ENCODE measurements at regions of chr14 and their contacts with region 1.

Region 1: GRCh38 chr14:61178226-61179060 is 102.7 kb downstream of the TMEM30B start:
- DNase-seq: peak; percentile 70
- H3K4me3 Mint-ChIP-seq: peak overlapping the region; percentile 36
- H3K27ac Mint-ChIP-seq: peak overlapping the region; percentile 98
- H3K4me1 Mint-ChIP-seq: peaks cover 42% of the 10 kb centered on the region
- H3K27me3 Mint-ChIP-seq: no peaks in the 10 kb centered on the region
- CTCF ChIP-seq: no peak

Region 2: GRCh38 chr14:60980811-60981632 is 197.4 kb before region 1 on chr14 and contains the starts of genes SLC38A6 and TRMT5:
- CTCF ChIA-PET with region 1: no interaction called
- intact Hi-C with region 1: loop called (anchors 5 kb)
- DNase-seq: peak; percentile 92
- H3K4me3 Mint-ChIP-seq: no peak within 1 kb of the TSS
- H3K27ac Mint-ChIP-seq: no peak within 1 kb of the TSS
- H3K4me1 Mint-ChIP-seq: peaks cover 9% of the 10 kb centered on the region
- H3K27me3 Mint-ChIP-seq: no peaks in the 10 kb centered on the region
- CTCF ChIP-seq: no peak
- total RNA-seq, gene SLC38A6: 9.9 and 13.4 TPM in 2 replicates
- total RNA-seq, gene TRMT5: 20.3 and 22.8 TPM in 2 replicates

Region 3: DNA sequence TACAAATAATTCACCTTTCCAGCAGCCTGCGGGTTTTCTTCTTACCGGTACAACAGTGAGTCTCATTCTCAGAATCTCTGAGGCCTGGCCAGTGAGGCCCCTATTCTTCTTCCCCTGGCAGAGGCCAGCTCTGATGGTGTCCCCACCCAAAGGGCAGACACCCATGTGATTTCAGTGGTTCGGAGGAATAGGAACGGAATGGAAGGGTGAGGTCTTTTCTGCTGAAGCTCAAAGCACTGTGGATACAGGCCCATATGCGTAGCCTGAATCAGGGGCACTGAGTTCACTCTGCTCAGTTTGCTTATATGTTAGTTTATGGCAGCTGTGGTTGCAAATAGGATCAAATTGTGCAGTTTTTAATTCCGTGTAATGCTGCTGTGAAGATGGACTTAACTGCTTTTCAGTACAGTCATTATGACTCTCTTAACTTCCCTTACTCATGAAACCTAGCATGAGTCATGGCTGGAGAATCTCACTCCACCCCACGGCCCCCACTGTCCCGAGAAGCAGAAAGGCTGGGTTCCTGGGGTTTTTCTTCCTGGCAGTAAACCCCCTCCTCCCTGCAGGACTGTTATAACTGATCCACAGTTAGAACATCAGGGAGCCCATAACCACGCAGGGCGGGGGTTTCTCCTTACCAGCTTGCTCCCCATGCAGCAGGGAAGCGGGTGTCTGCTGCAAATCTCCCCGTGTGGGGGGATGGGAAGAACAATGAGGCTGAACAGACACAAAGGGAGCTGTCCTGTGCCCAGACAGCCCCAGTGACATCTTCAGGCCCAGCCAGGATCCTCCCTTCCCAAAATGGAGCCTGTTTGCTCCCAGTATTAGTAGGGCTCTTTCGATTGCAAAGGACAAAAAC is 74.7 kb before region 1 on chr14:
- CTCF ChIA-PET with region 1: no interaction called
- intact Hi-C with region 1: loop called (anchors 5 kb)
- DNase-seq: peak; percentile 77
- H3K4me3 Mint-ChIP-seq: no peak overlapping the region
- H3K27ac Mint-ChIP-seq: peak overlapping the region; percentile 93
- H3K4me1 Mint-ChIP-seq: peaks cover 31% of the 10 kb centered on the region
- H3K27me3 Mint-ChIP-seq: no peaks in the 10 kb centered on the region
- CTCF ChIP-seq: no peak

Region 4: GRCh38 chr14:61121355-61121787 is 57.1 kb before region 1 on chr14:
- CTCF ChIA-PET with region 1: interaction called, 4 read pairs
- intact Hi-C with region 1: loop called (anchors 1 kb)
- DNase-seq: peak; percentile 65
- H3K4me3 Mint-ChIP-seq: peak overlapping the region; percentile 87
- H3K27ac Mint-ChIP-seq: peak overlapping the region; percentile 95
- H3K4me1 Mint-ChIP-seq: peaks cover 19% of the 10 kb centered on the region
- H3K27me3 Mint-ChIP-seq: no peaks in the 10 kb centered on the region
- CTCF ChIP-seq: no peak

Region 5: GRCh38 chr14:61147831-61148549 is 30.5 kb before region 1 on chr14:
- CTCF ChIA-PET with region 1: interaction called, 6 read pairs
- intact Hi-C with region 1: loop called (anchors 2 kb)
- DNase-seq: peak; percentile 86
- H3K4me3 Mint-ChIP-seq: no peak overlapping the region
- H3K27ac Mint-ChIP-seq: peak overlapping the region; percentile 88
- H3K4me1 Mint-ChIP-seq: peaks cover 52% of the 10 kb centered on the region
- H3K27me3 Mint-ChIP-seq: no peaks in the 10 kb centered on the region
- CTCF ChIP-seq: no peak

Region 6: DNA sequence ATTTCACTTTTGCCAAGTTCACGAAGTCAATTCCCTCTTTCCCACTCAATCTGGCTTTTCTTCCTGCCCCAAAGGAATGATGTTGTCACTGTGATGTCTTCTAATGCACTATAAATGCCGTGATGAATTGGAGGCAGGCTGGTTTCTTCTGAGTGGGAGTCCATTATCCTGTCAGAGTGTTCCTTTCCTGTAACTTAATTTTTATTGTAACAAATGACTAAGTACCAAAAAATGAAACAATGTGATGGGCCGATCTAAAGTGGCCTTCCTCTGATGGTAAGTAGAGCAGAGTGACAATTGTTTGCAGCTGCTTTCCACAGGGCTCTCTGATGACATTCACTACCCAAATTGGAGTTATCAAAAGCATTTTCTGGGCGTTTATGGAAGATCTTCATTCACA is 80.5 kb after region 1 on chr14:
- CTCF ChIA-PET with region 1: no interaction called
- intact Hi-C with region 1: loop called (anchors 5 kb)
- DNase-seq: no peak
- H3K4me3 Mint-ChIP-seq: no peak overlapping the region
- H3K27ac Mint-ChIP-seq: no peak overlapping the region
- H3K4me1 Mint-ChIP-seq: peaks cover 7% of the 10 kb centered on the region
- H3K27me3 Mint-ChIP-seq: no peaks in the 10 kb centered on the region
- CTCF ChIP-seq: no peak

Region 7: DNA sequence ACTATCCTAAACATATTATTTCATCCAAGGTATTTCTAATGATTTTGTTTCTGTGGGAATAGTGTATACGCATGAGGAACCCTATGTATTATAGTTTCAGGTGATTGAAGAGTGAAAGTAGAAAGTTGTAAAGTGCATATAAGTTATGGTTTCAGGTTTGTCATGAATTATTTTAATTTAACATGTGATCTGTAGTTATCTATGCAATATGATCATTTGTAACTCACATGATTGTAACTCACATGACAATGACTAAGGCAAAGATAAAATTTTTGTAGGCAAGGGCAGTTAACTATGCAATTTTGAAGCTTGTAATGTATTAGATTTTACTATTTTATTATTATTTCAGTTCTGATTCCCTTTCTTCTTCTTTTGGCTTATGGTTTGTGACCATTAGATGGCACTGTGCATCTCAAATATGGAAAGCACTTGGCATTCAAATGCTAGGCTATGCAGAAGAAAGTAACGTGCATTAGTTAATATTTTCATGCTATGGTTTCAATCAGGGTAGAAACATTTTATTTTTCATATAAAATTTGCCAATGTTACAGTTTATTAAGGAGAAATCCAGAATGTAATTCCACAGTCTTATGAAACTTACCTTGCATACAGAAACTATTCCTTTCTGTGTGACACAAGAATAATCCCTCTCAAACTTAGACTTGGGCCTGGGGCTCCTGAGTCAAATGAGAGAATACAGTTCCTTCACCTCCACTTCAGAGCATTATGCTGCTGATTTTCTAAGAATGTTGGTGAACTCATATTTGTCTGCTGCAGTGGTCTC is 118.5 kb after region 1 on chr14:
- CTCF ChIA-PET with region 1: no interaction called
- intact Hi-C with region 1: no loop called
- DNase-seq: peak; percentile 25
- H3K4me3 Mint-ChIP-seq: no peak overlapping the region
- H3K27ac Mint-ChIP-seq: no peak overlapping the region
- H3K4me1 Mint-ChIP-seq: peaks cover 9% of the 10 kb centered on the region
- H3K27me3 Mint-ChIP-seq: no peaks in the 10 kb centered on the region
- CTCF ChIP-seq: peak; percentile 29

Measured in Calu3 (cell line).